ENCODE measurements at regions of chr2 and their contacts with region 1.

Region 1: GRCh38 chr2:195656859-195657633 is at the start of gene SLC39A10:
- DNase-seq: peak; percentile 100
- ATAC-seq: peak; percentile 86
- H3K4me3 ChIP-seq: peak within 1 kb of the TSS; percentile 87 to 96 (median 93)
- H3K4me3 Mint-ChIP-seq: peak within 1 kb of the TSS; percentile 100
- H3K27ac ChIP-seq: peak within 1 kb of the TSS; percentile 98 to 99
- H3K27ac Mint-ChIP-seq: peak within 1 kb of the TSS; percentile 99
- H3K4me1 ChIP-seq: peaks cover 30 to 39% of the 10 kb centered on the region in 2 donors
- H3K4me1 Mint-ChIP-seq: peaks cover 55% of the 10 kb centered on the region
- H3K27me3 ChIP-seq: no peaks in the 10 kb centered on the region
- H3K27me3 Mint-ChIP-seq: no peaks in the 10 kb centered on the region
- CTCF ChIP-seq: no peak
- total RNA-seq, gene SLC39A10: 99.3 and 99.8 TPM in 2 replicates

Region 2: GRCh38 chr2:195404651-195405050 is 252.4 kb before region 1 on chr2:
- CTCF ChIA-PET with region 1: interaction called, 14 read pairs
- POLR2A ChIA-PET with region 1: no interaction called
- intact Hi-C with region 1: loop called (anchors 1 kb)
- DNase-seq: peak; percentile 28
- ATAC-seq: no peak
- H3K4me3 ChIP-seq: no peak overlapping the region
- H3K4me3 Mint-ChIP-seq: no peak overlapping the region
- H3K27ac ChIP-seq: no peak overlapping the region
- H3K27ac Mint-ChIP-seq: no peak overlapping the region
- H3K4me1 ChIP-seq: no peaks in the 10 kb centered on the region
- H3K4me1 Mint-ChIP-seq: no peaks in the 10 kb centered on the region
- H3K27me3 ChIP-seq: no peaks in the 10 kb centered on the region
- H3K27me3 Mint-ChIP-seq: no peaks in the 10 kb centered on the region
- CTCF ChIP-seq: peak; percentile 7

Region 3: DNA sequence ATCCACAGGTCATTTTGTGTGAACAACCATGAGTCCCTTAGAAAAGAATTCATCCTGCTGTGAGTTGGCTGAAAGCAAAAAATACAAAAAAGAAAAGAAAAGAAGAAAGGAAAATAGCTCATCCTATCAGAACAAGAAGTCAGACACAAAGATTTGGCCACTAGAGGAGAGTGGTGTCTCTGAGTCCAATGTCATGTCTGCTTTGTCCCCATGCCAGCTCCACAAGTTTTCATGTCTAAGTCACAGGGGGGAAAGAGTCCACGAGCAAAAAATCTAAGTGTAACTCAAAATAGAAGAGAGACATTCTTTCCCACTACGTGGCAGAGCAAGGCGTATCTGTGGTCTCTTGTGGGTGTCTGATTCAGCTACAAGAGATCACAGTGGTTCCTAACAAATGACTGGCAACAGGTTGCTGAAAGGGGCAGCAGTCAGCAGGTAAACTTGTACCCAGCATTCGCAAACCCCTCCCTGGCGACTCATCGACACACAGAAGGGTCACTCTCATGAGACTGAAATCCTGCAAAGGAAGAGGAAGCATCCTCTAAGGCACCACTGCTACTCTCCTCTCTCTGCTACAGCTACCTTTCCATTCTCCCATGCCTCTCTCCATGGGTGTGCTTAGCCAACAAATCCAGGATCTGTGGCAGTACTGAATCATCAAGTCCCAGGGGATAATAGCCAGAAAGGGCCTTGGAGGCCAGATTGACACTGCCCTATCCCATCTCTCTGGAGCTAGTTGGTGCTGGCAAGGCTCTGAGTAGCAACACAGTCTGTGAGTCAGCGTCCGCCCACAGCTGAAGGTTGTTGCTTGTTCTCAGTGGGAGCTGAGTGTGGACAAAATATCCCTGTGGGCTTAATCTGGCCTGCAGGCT is 123.0 kb before region 1 on chr2:
- CTCF ChIA-PET with region 1: interaction called, 113 read pairs
- POLR2A ChIA-PET with region 1: interaction called, 10 read pairs
- intact Hi-C with region 1: loop called (anchors 1 kb)
- DNase-seq: peak; percentile 31
- ATAC-seq: peak; percentile 60
- H3K4me3 ChIP-seq: peak overlapping the region in 1 of 5 experiments; percentile 62
- H3K4me3 Mint-ChIP-seq: peak overlapping the region; percentile 83
- H3K27ac ChIP-seq: peak overlapping the region; percentile 62 to 83
- H3K27ac Mint-ChIP-seq: peak overlapping the region; percentile 92
- H3K4me1 ChIP-seq: peaks cover 57 to 58% of the 10 kb centered on the region in 2 donors
- H3K4me1 Mint-ChIP-seq: peaks cover 65% of the 10 kb centered on the region
- H3K27me3 ChIP-seq: no peaks in the 10 kb centered on the region
- H3K27me3 Mint-ChIP-seq: no peaks in the 10 kb centered on the region
- CTCF ChIP-seq: no peak

Region 4: DNA sequence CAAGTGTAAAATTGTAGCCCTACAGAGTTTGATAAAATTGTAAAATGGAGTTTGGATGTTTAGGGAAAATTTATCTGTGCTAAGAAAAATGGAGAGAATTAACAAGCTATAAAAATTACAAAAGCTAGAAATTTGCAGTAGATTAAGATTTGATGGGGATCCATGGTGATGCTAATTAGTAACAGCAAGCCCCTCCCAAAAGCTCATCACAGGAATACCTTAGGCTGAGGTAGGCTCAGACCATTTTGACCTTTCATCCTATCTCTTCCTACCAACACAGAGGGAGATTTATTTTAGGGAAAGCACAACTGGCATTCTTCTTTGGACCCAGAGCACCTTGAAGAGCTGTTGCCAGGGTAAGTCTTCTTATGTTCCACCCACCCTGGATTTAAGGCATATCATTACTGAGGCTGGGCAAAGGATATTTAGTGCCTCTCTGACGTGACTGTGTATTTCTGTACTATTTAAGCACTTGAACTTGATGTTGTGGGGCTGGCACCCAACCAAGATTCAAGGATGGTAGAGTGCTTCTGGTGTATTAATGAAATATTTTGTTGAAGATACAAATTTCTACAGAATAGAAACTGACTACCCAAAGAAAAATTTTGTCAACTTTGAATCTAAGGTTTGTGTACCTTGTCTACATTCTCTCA is 70.9 kb before region 1 on chr2:
- CTCF ChIA-PET with region 1: interaction called, 10 read pairs
- POLR2A ChIA-PET with region 1: interaction called, 5 read pairs
- intact Hi-C with region 1: no loop called
- DNase-seq: no peak
- ATAC-seq: no peak
- H3K4me3 ChIP-seq: no peak overlapping the region
- H3K4me3 Mint-ChIP-seq: no peak overlapping the region
- H3K27ac ChIP-seq: no peak overlapping the region
- H3K27ac Mint-ChIP-seq: peak overlapping the region; percentile 26
- H3K4me1 ChIP-seq: no peaks in the 10 kb centered on the region
- H3K4me1 Mint-ChIP-seq: no peaks in the 10 kb centered on the region
- H3K27me3 ChIP-seq: no peaks in the 10 kb centered on the region
- H3K27me3 Mint-ChIP-seq: no peaks in the 10 kb centered on the region
- CTCF ChIP-seq: no peak

Region 5: DNA sequence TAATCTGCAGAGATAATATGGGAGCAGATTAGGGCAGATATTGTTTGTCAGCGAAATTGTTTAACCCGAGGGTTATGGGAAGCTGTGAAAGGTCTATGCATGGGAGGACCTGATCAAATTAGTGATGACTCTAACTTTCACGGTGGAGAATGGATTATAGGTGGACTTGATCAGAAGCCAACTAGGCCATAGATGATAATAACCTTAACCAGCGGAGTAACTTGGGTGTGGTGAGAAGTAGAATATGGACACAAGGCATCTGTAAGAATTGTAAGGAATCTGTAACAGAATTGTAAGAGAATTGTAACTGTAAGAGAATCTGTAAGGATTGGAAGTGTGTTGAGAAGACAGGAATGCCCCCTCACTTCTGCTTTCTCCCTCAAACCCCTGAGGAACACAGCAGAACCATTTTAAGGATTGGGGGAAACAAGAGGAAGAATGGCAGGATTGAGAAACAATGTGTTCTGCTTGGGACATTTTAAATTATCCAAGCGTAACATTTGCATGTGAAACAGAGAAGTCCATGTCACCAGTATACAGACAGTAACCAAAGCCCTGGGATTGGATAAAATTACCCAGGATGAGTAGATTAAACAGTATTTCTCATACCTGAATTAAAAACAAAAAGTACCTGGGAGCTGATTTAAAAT is 14.9 kb before region 1 on chr2:
- CTCF ChIA-PET with region 1: interaction called, 7 read pairs
- POLR2A ChIA-PET with region 1: interaction called, 3 read pairs
- intact Hi-C with region 1: loop called (anchors 2 kb)
- DNase-seq: no peak
- ATAC-seq: no peak
- H3K4me3 ChIP-seq: no peak overlapping the region
- H3K4me3 Mint-ChIP-seq: no peak overlapping the region
- H3K27ac ChIP-seq: no peak overlapping the region
- H3K27ac Mint-ChIP-seq: no peak overlapping the region
- H3K4me1 ChIP-seq: peaks cover 16 to 18% of the 10 kb centered on the region in 2 donors
- H3K4me1 Mint-ChIP-seq: peaks cover 31% of the 10 kb centered on the region
- H3K27me3 ChIP-seq: no peaks in the 10 kb centered on the region
- H3K27me3 Mint-ChIP-seq: no peaks in the 10 kb centered on the region
- CTCF ChIP-seq: no peak

Region 6: DNA sequence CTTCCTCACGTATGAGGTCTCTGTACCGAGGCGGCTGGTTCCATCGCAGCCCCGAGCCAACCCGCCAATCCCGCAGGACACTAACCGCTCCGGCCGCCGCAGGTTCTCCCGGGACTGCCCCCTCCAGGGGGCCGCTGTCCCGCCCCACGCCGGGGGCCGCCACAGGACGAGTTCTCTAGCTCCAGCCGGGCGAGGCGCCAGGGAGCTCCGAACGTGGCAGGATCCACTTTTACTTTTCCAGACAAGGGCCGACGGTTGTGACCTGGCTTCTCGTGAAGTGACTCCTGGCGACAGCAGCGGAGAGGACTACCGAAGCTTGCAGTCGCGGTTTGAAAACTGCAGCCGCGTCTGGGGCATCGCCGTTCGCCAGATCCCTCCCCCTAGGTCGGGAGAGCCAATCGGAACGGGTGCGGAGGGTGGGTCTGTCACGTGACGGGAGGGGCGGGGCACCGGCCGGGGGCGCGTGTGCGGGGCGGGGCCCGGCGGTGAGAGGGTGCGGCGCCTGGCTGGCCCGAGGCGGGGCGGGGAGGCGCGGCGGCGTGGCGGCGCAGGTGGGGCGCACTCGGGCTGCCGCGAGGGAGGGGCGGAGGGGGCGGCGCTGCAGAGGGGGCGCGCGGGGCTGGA is 514.3 kb after region 1 on chr2 and contains the start of gene STK17B:
- CTCF ChIA-PET with region 1: no interaction called
- POLR2A ChIA-PET with region 1: interaction called, 4 read pairs
- intact Hi-C with region 1: loop called (anchors 2 kb)
- DNase-seq: peak; percentile 98
- ATAC-seq: peak; percentile 66
- H3K4me3 ChIP-seq: peak within 1 kb of the TSS; percentile 94 to 100 (median 98)
- H3K4me3 Mint-ChIP-seq: peak within 1 kb of the TSS; percentile 100
- H3K27ac ChIP-seq: peak within 1 kb of the TSS; percentile 93 to 99
- H3K27ac Mint-ChIP-seq: peak within 1 kb of the TSS; percentile 99
- H3K4me1 ChIP-seq: peaks cover 50 to 51% of the 10 kb centered on the region in 2 donors
- H3K4me1 Mint-ChIP-seq: peaks cover 56% of the 10 kb centered on the region
- H3K27me3 ChIP-seq: no peaks in the 10 kb centered on the region
- H3K27me3 Mint-ChIP-seq: no peaks in the 10 kb centered on the region
- CTCF ChIP-seq: no peak
- total RNA-seq, gene STK17B: 249 and 261 TPM in 2 replicates

Region 7: DNA sequence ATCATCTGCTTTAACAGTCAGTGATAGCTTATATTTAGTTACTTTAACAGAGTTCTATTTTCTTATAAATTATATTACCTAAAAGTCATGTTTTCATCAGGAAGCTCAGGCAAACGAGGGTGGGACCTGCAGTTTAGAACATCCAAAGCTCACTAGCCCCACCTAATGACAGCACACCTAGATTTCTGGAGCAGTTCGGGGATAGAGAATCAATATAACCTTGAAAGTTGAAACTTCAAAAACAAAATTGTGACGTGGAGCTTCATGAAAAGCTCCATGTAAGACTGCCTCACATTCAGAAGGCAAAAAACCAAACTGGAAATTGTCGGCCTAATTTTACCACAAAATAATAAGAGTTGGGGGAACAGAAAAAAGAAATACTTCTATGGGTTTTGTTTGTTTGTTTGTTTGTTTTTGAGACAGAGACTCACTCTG is 796.6 kb after region 1 on chr2:
- CTCF ChIA-PET with region 1: interaction called, 5 read pairs
- POLR2A ChIA-PET with region 1: no interaction called
- intact Hi-C with region 1: loop called (anchors 5 kb)
- DNase-seq: peak; percentile 63
- ATAC-seq: peak; percentile 43
- H3K4me3 ChIP-seq: no peak overlapping the region
- H3K4me3 Mint-ChIP-seq: no peak overlapping the region
- H3K27ac ChIP-seq: no peak overlapping the region
- H3K27ac Mint-ChIP-seq: no peak overlapping the region
- H3K4me1 ChIP-seq: no peaks in the 10 kb centered on the region
- H3K4me1 Mint-ChIP-seq: no peaks in the 10 kb centered on the region
- H3K27me3 ChIP-seq: peaks cover 0 to 5% (median 0%) of the 10 kb centered on the region in 4 experiments
- H3K27me3 Mint-ChIP-seq: peaks cover 23% of the 10 kb centered on the region
- CTCF ChIP-seq: peak; percentile 52